ENCODE measurements at regions of chr5 and their contacts with region 1.

Region 1: DNA sequence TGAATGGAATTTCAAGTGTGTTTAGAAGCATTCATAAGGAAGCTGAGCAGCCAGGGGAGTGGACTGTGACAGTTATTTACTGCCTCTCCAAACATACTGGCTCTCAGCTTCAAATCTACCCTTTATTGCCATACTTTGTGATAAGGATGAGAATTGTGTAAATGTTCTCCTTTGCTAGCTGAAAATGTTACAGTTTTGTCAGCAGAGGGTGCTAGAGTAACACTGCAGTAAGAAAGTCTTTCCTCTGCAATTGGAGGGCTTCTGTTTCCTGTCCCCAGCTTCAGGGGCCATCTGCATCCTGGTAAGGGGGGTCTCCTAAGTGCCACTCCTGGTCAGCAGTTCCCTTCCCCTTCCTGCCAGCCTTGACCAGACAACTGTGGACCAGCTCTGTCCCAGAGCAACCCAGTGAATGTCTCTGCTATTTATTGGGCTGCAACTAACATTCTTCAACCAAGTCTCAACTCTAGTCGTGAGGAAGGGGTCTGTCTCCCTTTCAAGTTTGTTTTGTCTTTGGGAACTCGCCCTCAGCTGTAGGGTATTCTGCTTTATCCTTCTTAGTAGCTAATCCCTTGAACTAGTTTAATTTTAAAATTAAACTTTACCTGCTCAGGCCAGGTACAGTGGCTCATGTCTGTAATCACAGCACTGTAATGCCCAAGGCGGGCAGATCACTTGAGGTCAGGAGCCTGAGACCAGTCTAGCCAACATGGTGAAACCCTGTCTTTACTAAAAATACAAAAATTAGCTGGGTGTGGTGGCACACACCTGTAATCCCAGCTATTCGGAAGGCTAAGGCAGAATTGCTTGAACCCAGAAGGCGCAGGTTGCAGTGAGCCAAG is 45.3 kb downstream of the RAPGEF6 start:
- DNase-seq: peak; percentile 75
- ATAC-seq: peak; percentile 54
- H3K4me3 ChIP-seq: no peak overlapping the region
- H3K4me3 Mint-ChIP-seq: no peak overlapping the region
- H3K27ac ChIP-seq: peak overlapping the region in 1 of 2 donors; percentile 4
- H3K27ac Mint-ChIP-seq: no peak overlapping the region
- H3K4me1 ChIP-seq: peaks cover 13 to 19% of the 10 kb centered on the region in 2 donors
- H3K4me1 Mint-ChIP-seq: peaks cover 23% of the 10 kb centered on the region
- H3K27me3 ChIP-seq: no peaks in the 10 kb centered on the region
- H3K27me3 Mint-ChIP-seq: no peaks in the 10 kb centered on the region
- CTCF ChIP-seq: peak; percentile 96

Region 2: DNA sequence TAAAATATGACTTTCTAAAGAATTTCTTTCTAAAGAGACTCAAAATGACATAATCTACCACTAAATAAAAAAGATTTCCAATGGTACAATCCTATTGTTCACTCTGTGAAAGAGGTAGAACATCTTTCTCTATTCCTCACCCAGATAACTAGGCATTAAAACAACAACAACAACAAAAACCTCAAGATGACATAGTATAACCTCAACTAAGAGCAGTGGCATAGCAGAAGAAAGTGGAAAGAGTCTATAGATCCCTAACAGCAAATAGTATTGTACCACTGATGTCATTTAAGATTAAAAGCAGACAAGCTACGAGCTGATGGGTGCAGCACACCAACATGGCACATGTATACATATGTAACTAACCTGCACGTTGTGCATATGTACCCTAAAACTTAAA is 15.4 kb after region 1 on chr5:
- CTCF ChIA-PET with region 1: interaction called, 13 read pairs
- POLR2A ChIA-PET with region 1: no interaction called
- intact Hi-C with region 1: no loop called
- DNase-seq: no peak
- ATAC-seq: no peak
- H3K4me3 ChIP-seq: no peak overlapping the region
- H3K4me3 Mint-ChIP-seq: no peak overlapping the region
- H3K27ac ChIP-seq: no peak overlapping the region
- H3K27ac Mint-ChIP-seq: no peak overlapping the region
- H3K4me1 ChIP-seq: peaks cover 14 to 19% of the 10 kb centered on the region in 2 donors
- H3K4me1 Mint-ChIP-seq: peaks cover 38% of the 10 kb centered on the region
- H3K27me3 ChIP-seq: no peaks in the 10 kb centered on the region
- H3K27me3 Mint-ChIP-seq: no peaks in the 10 kb centered on the region
- CTCF ChIP-seq: no peak

Region 3: DNA sequence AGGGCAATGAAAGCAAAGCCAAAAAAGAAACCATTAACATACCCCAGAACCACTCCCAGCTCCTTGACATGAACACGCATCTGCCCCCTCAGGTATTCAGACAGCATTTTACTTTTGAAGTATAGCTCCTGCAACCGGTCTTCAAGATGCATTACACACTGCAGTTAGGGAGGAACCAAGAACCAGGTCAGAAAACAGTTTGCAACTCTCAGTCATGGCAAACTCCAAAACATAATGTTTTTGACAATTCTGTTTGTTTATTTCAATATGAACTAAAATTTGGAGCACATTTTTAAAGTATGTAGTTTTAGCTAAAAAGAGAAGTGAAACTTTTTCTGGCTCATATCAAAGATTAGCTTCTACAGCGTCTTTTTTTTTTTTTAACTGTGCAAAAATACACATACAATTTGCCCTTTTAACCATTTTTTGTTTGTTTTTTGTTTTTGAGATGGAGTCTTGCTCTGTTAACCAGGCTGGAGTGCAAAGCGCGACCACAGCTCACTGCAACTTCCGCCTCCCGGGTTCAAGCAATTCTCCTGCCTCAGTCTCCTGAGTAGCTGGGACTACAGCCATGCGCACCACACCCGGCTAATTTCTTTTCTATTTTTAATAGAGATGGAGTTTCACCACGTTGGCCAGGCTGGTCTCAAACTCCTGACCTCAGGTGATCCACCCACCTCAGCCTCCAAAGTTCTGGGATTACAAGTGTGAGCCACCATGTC is 57.5 kb after region 1 on chr5:
- CTCF ChIA-PET with region 1: interaction called, 33 read pairs
- POLR2A ChIA-PET with region 1: no interaction called
- intact Hi-C with region 1: loop called (anchors 1 kb)
- DNase-seq: peak; percentile 75
- ATAC-seq: peak; percentile 88
- H3K4me3 ChIP-seq: peak overlapping the region; percentile 2 to 63 (median 45)
- H3K4me3 Mint-ChIP-seq: peak overlapping the region; percentile 67
- H3K27ac ChIP-seq: peak overlapping the region; percentile 55 to 70
- H3K27ac Mint-ChIP-seq: peak overlapping the region; percentile 94
- H3K4me1 ChIP-seq: peaks cover 16 to 22% of the 10 kb centered on the region in 2 donors
- H3K4me1 Mint-ChIP-seq: peaks cover 31% of the 10 kb centered on the region
- H3K27me3 ChIP-seq: no peaks in the 10 kb centered on the region
- H3K27me3 Mint-ChIP-seq: no peaks in the 10 kb centered on the region
- CTCF ChIP-seq: peak; percentile 50

Region 4: GRCh38 chr5:131796793-131797693 is 207.3 kb after region 1 on chr5 and contains the start of gene FNIP1:
- CTCF ChIA-PET with region 1: interaction called, 10 read pairs
- POLR2A ChIA-PET with region 1: no interaction called
- intact Hi-C with region 1: no loop called
- DNase-seq: peak; percentile 98
- ATAC-seq: peak; percentile 93
- H3K4me3 ChIP-seq: peak within 1 kb of the TSS; percentile 66 to 82 (median 76)
- H3K4me3 Mint-ChIP-seq: peak within 1 kb of the TSS; percentile 98
- H3K27ac ChIP-seq: peak within 1 kb of the TSS; percentile 82 to 100
- H3K27ac Mint-ChIP-seq: peak within 1 kb of the TSS; percentile 96
- H3K4me1 ChIP-seq: peaks cover 15 to 21% of the 10 kb centered on the region in 2 donors
- H3K4me1 Mint-ChIP-seq: peaks cover 40% of the 10 kb centered on the region
- H3K27me3 ChIP-seq: no peaks in the 10 kb centered on the region
- H3K27me3 Mint-ChIP-seq: no peaks in the 10 kb centered on the region
- CTCF ChIP-seq: no peak
- total RNA-seq, gene FNIP1: 52.8 and 57.8 TPM in 2 replicates

Region 5: GRCh38 chr5:132016721-132017250 is 427.1 kb after region 1 on chr5:
- CTCF ChIA-PET with region 1: interaction called, 405 read pairs
- POLR2A ChIA-PET with region 1: no interaction called
- intact Hi-C with region 1: no loop called
- DNase-seq: no peak
- ATAC-seq: no peak
- H3K4me3 ChIP-seq: no peak overlapping the region
- H3K4me3 Mint-ChIP-seq: no peak overlapping the region
- H3K27ac ChIP-seq: no peak overlapping the region
- H3K27ac Mint-ChIP-seq: no peak overlapping the region
- H3K4me1 ChIP-seq: peaks cover 10 to 16% of the 10 kb centered on the region in 2 donors
- H3K4me1 Mint-ChIP-seq: peaks cover 17% of the 10 kb centered on the region
- H3K27me3 ChIP-seq: peaks cover 0 to 43% (median 17%) of the 10 kb centered on the region in 4 experiments
- H3K27me3 Mint-ChIP-seq: peaks cover 70% of the 10 kb centered on the region
- CTCF ChIP-seq: no peak

Region 6: GRCh38 chr5:132927355-132928061 is 1337.8 kb after region 1 on chr5:
- CTCF ChIA-PET with region 1: no interaction called
- POLR2A ChIA-PET with region 1: no interaction called
- intact Hi-C with region 1: no loop called
- DNase-seq: no peak
- ATAC-seq: no peak
- H3K4me3 ChIP-seq: no peak overlapping the region
- H3K4me3 Mint-ChIP-seq: no peak overlapping the region
- H3K27ac ChIP-seq: no peak overlapping the region
- H3K27ac Mint-ChIP-seq: no peak overlapping the region
- H3K4me1 ChIP-seq: no peaks in the 10 kb centered on the region
- H3K4me1 Mint-ChIP-seq: peaks cover 1% of the 10 kb centered on the region
- H3K27me3 ChIP-seq: no peaks in the 10 kb centered on the region
- H3K27me3 Mint-ChIP-seq: no peaks in the 10 kb centered on the region
- CTCF ChIP-seq: no peak

Measured in B cell (primary cell).